Dorsolateral prefrontal cortex (tissue), 120 donors: ENCODE measurements at regions of chr16 and their contacts with region 1.

Region 1: GRCh38 chr16:66872943-66873684 is 7.2 kb upstream of the PDP2 start:
- DNase-seq: peak; percentile 75 to 94 (median 87)
- H3K4me3 ChIP-seq: peak overlapping the region; percentile 17 to 73 (median 57)
- H3K27ac ChIP-seq: peak overlapping the region in 48 of 59 donors; percentile 4 to 83 (median 53)
- H3K27me3 ChIP-seq: no peaks in the 10 kb centered on the region
- CTCF ChIP-seq: peak; percentile 77 to 98 (median 93)

Region 2: GRCh38 chr16:66406534-66407221 is 466.4 kb before region 1 on chr16:
- intact Hi-C with region 1: loop called in 1 of 2 experiments (anchors 10 kb)
- DNase-seq: peak; percentile 78 to 89 (median 89)
- H3K4me3 ChIP-seq: peak overlapping the region; percentile 51 to 98 (median 72)
- H3K27ac ChIP-seq: peak overlapping the region in 44 of 59 donors; percentile 3 to 87 (median 68)
- H3K27me3 ChIP-seq: peaks cover 0 to 10% (median 0%) of the 10 kb centered on the region in 45 donors
- CTCF ChIP-seq: peak; percentile 79 to 99 (median 92)

Region 3: DNA sequence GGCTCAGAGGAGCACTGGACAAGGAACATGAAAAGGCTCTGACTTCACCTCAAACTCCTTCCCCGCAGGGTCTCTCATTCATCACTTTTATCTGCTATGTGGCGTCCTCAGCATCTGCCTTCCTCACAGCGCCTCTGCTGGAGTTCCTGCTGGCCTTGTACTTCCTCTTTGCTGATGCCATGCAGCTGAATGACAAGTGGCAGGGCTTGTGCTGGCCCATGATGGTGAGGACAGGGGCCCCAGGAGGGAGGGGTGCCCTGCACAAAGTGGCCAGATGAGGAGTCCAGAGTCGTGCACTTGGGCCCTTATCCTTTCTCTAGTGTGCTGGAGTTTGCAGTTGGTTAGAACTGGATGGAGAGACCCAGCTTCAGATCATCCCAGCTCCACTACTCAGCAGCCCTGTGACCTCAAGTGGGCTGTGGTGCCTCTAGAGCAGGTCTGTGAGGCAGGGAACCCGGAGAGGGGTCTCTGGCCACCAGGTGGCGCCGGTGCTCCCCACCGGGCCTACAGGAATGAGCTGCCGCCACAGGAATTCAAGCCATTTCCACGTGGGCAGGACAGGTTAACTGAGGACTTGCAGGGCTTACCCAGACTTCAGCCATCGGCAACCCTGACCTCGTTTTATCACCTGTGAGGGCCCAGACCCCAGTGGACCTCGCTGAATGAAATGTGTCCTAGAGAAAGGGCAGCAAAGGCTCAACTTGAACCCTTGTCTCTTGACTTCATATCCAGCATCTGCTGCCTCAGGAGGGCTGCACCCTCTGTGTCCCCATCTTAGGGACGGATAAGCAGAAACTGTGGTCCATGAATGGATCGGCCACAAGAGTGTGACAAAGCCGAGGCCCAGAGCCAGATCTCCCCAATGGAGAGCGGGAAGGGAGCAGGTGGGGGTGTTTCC is 264.6 kb before region 1 on chr16:
- intact Hi-C with region 1: loop called in 1 of 2 experiments (anchors 5 kb)
- DNase-seq: peak; percentile 70 to 88 (median 83)
- H3K4me3 ChIP-seq: no peak overlapping the region
- H3K27ac ChIP-seq: peak overlapping the region in 3 of 59 donors; percentile 4 to 44 (median 23)
- H3K27me3 ChIP-seq: no peaks in the 10 kb centered on the region
- CTCF ChIP-seq: peak; percentile 64 to 94 (median 86)

Region 4: GRCh38 chr16:66650707-66651473 is 222.2 kb before region 1 on chr16:
- intact Hi-C with region 1: loop called in 1 of 2 experiments (anchors 5 kb)
- DNase-seq: peak; percentile 49 to 91 (median 84)
- H3K4me3 ChIP-seq: peak overlapping the region; percentile 9 to 63 (median 46)
- H3K27ac ChIP-seq: peak overlapping the region in 54 of 59 donors; percentile 20 to 81 (median 64)
- H3K27me3 ChIP-seq: no peaks in the 10 kb centered on the region
- CTCF ChIP-seq: peak; percentile 62 to 99 (median 93)

Region 5: DNA sequence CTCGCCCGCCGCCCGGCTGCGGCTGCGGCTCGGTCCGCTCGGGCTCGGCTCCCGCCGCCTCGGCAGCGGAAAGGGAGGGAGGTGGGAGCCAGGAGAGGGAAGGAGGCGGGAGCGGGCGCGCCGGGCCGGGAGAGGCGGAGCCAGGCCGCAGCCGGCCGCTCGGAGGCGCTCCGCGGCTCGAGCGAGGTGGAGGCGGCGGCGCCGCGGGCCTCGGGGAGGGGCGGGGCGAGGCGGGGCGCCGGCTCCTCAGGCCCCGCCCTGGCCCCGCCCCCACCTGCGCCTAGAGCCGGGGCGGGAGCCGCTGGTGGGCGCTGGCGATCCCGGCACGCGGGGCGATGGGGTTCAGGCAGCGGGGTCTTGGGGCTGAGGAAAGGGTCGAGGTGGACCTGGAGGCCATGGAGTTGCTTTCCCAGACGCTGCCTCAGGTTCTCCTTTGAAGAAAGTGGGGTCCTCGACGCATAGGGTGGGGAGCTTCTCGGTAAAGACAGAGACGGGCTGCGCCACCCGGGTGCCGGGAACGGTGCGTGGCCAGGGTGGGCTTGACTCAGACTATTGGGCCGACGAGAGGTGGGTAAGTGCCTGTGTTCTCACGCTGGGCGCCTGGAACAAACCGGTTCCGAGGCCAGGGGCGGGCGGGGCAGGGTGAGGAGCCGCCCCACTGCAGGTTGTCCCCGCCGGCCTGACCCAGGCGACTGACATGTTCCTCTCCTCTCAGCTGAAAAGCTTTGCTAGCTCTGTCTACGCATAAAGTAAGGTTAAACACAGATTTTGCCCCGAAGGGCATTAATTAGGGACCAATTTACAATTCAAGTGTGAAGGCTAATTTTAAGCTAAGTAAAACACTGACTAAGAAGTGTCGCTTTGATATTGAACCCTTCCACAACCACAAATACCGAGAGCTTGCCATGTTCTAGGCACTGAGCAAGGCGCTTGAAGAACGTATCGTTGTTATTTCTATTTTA is 176.2 kb before region 1 on chr16 and contains the start of gene CMTM4:
- intact Hi-C with region 1: no loop called
- DNase-seq: peak; percentile 59 to 92 (median 80)
- H3K4me3 ChIP-seq: peak within 1 kb of the TSS; percentile 64 to 95 (median 84)
- H3K27ac ChIP-seq: peak within 1 kb of the TSS; percentile 25 to 95 (median 84)
- H3K27me3 ChIP-seq: no peaks in the 10 kb centered on the region
- CTCF ChIP-seq: peak in 29 of 56 donors; percentile 4 to 57 (median 32)
- total RNA-seq, gene CMTM4: 82.8 to 193 (median 119) TPM

Region 6: GRCh38 chr16:66717112-66717675 is 155.9 kb before region 1 on chr16:
- intact Hi-C with region 1: loop called (anchors 5 to 10 kb)
- DNase-seq: peak in 8 of 10 donors; percentile 37 to 72 (median 57)
- H3K4me3 ChIP-seq: no peak overlapping the region
- H3K27ac ChIP-seq: peak overlapping the region in 18 of 59 donors; percentile 2 to 55 (median 34)
- H3K27me3 ChIP-seq: no peaks in the 10 kb centered on the region
- CTCF ChIP-seq: peak in 55 of 56 donors; percentile 34 to 77 (median 63)

Region 7: GRCh38 chr16:66830422-66831404 is 42.4 kb before region 1 on chr16 and contains the start of gene NAE1:
- intact Hi-C with region 1: loop called (anchors 2 to 5 kb)
- DNase-seq: peak; percentile 61 to 92 (median 77)
- H3K4me3 ChIP-seq: peak within 1 kb of the TSS; percentile 40 to 99 (median 90)
- H3K27ac ChIP-seq: peak within 1 kb of the TSS in 58 of 59 donors; percentile 35 to 96 (median 89)
- H3K27me3 ChIP-seq: no peaks in the 10 kb centered on the region
- CTCF ChIP-seq: peak; percentile 57 to 99 (median 95)
- total RNA-seq, gene NAE1: 42.3 to 101 (median 76.7) TPM